GM10248 (cell line): ENCODE measurements at regions of chr3 and their contacts with region 1.

Region 1: GRCh38 chr3:142828703-142829305 is 60.1 kb downstream of the PCOLCE2 start:
- DNase-seq: peak; percentile 71
- CTCF ChIP-seq: peak; percentile 88

Region 2: DNA sequence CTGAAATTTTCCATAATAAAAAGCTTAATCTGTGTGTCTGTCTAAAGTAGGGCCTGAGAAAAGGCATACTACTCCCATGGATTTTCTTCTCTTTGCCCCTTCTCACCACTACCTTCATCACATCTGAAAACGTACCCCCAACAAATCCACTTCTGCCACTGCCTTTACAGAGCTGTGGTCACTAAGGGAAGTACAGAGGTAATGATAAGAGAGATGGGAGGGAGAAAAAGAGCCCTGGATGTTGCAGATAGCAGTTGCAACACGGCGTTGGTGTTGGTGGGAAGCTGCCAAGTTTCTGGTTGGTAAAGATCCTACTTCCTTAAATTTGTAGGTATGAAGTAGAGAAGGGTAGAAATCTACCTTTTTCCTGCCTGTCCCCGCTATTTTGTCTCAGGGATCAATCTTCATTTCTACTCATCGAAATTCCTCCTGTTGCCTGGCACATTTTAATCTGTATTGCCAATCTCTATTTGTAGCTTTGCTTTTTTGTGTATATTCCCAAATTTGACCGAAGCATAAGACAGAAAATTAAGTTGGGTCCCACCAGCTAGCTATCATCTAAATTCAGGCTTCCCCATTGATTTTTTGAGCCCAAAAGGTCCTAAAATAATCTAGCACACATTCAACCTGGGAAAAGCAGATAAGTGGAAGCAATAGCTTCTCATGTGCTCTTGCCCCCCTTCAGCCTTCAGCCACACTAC is 782.3 kb before region 1 on chr3:
- CTCF ChIA-PET with region 1: no interaction called
- POLR2A ChIA-PET with region 1: no interaction called
- DNase-seq: no peak
- CTCF ChIP-seq: no peak

Region 3: GRCh38 chr3:142595951-142596725 is 232.7 kb before region 1 on chr3 and contains the start of gene PLS1:
- CTCF ChIA-PET with region 1: no interaction called
- POLR2A ChIA-PET with region 1: no interaction called
- DNase-seq: peak; percentile 91
- CTCF ChIP-seq: no peak

Region 4: DNA sequence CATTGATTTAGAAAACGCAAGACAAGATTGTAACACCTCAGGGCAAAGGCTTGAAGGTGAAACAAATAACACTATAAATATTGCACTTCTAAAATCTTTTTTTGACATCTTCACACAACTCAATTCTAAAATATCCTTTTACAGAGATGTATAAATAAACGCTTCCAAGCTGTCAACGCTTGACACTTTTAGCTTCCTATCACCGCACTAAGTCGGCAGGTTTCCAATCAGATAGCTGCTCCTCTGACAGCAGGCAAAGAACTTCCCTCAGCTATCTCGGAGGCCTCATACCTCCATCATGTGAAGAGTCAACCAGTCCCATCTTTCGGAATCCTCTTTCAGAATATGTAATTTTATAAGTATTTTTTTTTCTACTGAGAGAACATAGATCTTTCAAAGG is 10.9 kb before region 1 on chr3:
- CTCF ChIA-PET with region 1: interaction called, 79 read pairs
- POLR2A ChIA-PET with region 1: no interaction called
- DNase-seq: no peak
- CTCF ChIP-seq: no peak

Region 5: DNA sequence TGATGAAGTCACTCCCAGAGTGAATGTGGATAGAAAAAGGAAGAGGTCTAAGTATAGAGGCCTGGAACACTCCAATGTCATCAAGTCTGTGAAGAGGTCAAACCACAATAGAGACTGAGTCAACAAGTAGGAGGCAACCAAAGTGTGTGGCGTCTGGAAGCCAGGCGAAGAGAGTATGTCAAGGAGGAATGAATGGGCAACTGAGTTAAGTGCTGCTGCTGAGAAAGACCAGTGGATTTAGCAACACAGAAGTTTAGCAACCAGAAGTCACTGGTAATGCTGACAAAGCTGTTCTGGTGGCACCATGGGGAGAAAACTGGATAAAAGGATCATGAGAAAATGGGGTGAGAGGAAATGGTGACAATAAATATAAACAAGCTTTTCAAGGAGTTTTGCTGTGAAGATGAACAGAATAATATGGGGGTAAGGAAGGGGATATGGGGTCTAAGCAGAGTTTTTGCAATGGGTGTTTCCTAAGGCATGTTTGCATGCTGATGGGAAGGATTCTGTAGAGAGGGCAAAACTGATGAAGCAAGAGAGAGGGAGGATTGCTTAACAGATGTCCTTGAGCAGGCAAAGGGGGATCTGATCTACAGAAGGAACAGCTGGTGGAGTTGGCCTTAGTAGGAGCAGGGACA is 21.7 kb after region 1 on chr3:
- CTCF ChIA-PET with region 1: interaction called, 17 read pairs
- POLR2A ChIA-PET with region 1: no interaction called
- DNase-seq: no peak
- CTCF ChIP-seq: no peak

Region 6: GRCh38 chr3:142888099-142888480 is 59.3 kb after region 1 on chr3:
- CTCF ChIA-PET with region 1: interaction called, 12 read pairs
- POLR2A ChIA-PET with region 1: no interaction called
- DNase-seq: no peak
- CTCF ChIP-seq: no peak

Region 7: GRCh38 chr3:142981108-142981507 is 152.3 kb after region 1 on chr3:
- CTCF ChIA-PET with region 1: interaction called, 62 read pairs
- POLR2A ChIA-PET with region 1: no interaction called
- DNase-seq: no peak
- CTCF ChIP-seq: no peak

Region 8: DNA sequence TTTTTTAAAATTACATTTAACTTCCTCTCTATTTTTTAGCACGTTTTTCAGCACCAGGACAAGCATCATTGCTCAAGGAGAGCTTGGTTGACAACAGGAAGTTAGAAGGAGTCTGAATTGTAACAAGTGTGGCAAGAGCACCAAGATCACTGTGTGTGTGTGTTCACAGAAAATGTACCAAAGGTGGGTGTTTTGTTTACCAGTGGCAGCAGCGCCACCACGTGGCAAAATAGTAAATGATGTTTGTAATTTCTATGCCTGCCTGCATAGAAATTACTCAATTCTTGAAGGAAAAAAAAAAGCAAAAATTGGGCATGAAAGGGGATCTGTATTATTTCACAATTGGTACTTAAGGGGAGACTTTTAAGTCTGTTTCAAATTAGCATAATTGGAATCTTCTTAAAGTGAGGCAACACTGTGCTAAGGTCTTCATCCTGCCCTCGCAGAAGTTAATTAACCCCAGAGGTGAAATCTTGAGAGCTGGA is 165.2 kb after region 1 on chr3:
- CTCF ChIA-PET with region 1: interaction called, 130 read pairs
- POLR2A ChIA-PET with region 1: no interaction called
- DNase-seq: peak; percentile 69
- CTCF ChIP-seq: peak; percentile 77

Region 9: DNA sequence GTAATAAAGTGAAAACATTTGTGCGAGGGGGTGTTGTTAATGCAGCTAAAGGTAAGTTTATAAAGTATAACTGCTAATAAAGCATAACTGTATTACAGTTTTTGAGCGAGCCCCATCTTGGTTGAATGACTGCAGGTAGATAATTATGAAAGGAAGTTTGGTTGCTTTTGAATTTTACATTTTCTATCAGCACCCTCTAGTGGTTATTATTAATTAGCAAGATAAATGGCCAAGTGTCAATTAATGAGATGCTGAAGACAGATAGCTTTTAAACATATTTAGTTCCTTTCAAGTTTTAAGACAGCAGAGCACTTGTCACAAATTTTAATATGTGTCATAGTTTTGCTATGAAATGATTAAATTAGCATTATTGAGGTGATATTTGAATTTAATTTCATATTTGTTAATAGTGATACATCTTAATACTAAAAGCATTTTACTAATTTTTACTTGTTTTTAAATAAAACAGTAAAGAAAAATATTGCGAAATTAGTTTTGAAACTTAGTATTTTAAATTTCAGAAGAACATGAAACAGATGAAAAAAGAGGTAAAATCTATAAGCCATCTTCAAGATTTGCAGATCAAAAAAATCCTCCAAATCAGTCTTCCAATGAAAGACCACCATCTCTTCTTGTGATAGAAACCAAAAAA is 187.6 kb after region 1 on chr3:
- CTCF ChIA-PET with region 1: interaction called, 12 read pairs
- POLR2A ChIA-PET with region 1: no interaction called
- DNase-seq: no peak
- CTCF ChIP-seq: peak; percentile 49

Region 10: DNA sequence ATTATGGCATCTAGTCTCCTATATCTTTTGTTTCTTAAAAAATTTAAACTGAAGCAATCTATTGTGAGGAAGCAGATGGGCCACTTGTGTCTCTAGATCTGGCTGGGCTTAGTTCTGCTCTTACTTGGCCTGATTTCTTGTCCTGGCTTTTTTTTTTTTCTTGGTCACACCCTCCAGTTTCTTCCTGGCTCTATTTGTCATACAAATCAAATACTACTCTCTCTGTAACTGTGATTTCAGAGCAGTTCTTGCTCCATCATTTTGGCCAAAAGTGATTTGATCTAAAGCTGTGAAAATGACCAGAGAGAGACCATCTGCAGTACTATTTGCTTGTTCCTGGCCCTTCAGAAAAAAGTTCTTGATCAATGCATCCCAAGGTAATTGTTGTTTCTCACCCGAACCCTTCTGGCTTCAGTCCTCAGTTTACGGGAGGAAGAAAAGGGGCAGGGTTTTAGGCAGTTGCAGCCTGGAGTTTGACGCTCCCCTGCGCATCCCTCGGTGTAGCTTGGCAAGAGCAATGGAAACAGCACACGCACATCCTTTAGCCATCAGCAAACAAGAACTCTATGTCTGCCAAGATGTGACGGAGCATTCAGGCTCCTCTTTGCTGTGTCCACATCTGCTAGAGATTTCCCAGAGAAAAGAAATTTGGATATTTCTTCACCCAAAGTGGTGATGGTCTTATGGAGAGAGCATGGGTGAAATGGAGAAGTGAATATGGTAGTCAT is 322.4 kb after region 1 on chr3:
- CTCF ChIA-PET with region 1: no interaction called
- POLR2A ChIA-PET with region 1: no interaction called
- DNase-seq: no peak
- CTCF ChIP-seq: no peak